ENCODE measurements at regions of chr2 and their contacts with region 1.

Region 1: GRCh38 chr2:101001691-101002561 is at the start of gene RPL31:
- DNase-seq: peak; percentile 98
- ATAC-seq: peak; percentile 94
- H3K4me3 Mint-ChIP-seq: peak within 1 kb of the TSS; percentile 97
- H3K27ac Mint-ChIP-seq: peak within 1 kb of the TSS; percentile 98
- H3K4me1 Mint-ChIP-seq: peaks cover 45% of the 10 kb centered on the region
- H3K27me3 Mint-ChIP-seq: no peaks in the 10 kb centered on the region
- CTCF ChIP-seq: no peak
- total RNA-seq, gene RPL31: 1,667 to 1,859 TPM

Region 2: GRCh38 chr2:100752628-100753333 is 249.1 kb before region 1 on chr2:
- CTCF ChIA-PET with region 1: no interaction called
- POLR2A ChIA-PET with region 1: no interaction called
- intact Hi-C with region 1: no loop called
- DNase-seq: no peak
- ATAC-seq: no peak
- H3K4me3 Mint-ChIP-seq: no peak overlapping the region
- H3K27ac Mint-ChIP-seq: no peak overlapping the region
- H3K4me1 Mint-ChIP-seq: peaks cover 16% of the 10 kb centered on the region
- H3K27me3 Mint-ChIP-seq: peaks cover 5% of the 10 kb centered on the region
- CTCF ChIP-seq: no peak

Region 3: GRCh38 chr2:100935372-100935752 is 66.6 kb before region 1 on chr2:
- CTCF ChIA-PET with region 1: no interaction called
- POLR2A ChIA-PET with region 1: no interaction called
- intact Hi-C with region 1: no loop called
- DNase-seq: no peak
- ATAC-seq: no peak
- H3K4me3 Mint-ChIP-seq: no peak overlapping the region
- H3K27ac Mint-ChIP-seq: no peak overlapping the region
- H3K4me1 Mint-ChIP-seq: peaks cover 5% of the 10 kb centered on the region
- H3K27me3 Mint-ChIP-seq: no peaks in the 10 kb centered on the region
- CTCF ChIP-seq: no peak

Region 4: DNA sequence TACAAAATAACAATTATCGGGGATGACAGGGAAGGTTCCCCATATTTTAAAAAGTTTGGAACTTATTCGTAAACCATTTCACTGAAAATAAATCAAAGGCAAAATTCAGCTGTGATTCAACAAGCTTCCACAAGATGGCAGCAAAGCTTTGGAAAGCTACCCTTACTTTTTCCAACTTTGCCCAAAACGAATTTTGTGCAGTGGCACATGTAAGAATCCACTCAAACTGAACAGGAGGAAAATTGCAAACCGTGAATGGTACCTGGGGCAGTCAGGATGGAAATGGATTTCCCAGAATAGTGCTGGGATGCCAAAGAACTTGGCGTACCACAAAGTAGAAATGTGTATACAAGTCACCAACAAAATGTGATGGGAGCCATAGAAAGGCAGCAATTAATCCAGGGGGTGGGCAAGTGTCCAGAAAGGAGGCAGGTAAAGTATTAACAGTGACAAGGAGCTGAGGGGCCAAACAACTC is 10.8 kb after region 1 on chr2:
- CTCF ChIA-PET with region 1: interaction called, 14 read pairs
- POLR2A ChIA-PET with region 1: interaction called, 8 read pairs
- intact Hi-C with region 1: no loop called
- DNase-seq: peak; percentile 34
- ATAC-seq: no peak
- H3K4me3 Mint-ChIP-seq: no peak overlapping the region
- H3K27ac Mint-ChIP-seq: no peak overlapping the region
- H3K4me1 Mint-ChIP-seq: peaks cover 22% of the 10 kb centered on the region
- H3K27me3 Mint-ChIP-seq: no peaks in the 10 kb centered on the region
- CTCF ChIP-seq: peak; percentile 90

Region 5: GRCh38 chr2:101047075-101047766 is 45.3 kb after region 1 on chr2:
- CTCF ChIA-PET with region 1: no interaction called
- POLR2A ChIA-PET with region 1: no interaction called
- intact Hi-C with region 1: no loop called
- DNase-seq: no peak
- ATAC-seq: no peak
- H3K4me3 Mint-ChIP-seq: no peak overlapping the region
- H3K27ac Mint-ChIP-seq: no peak overlapping the region
- H3K4me1 Mint-ChIP-seq: no peaks in the 10 kb centered on the region
- H3K27me3 Mint-ChIP-seq: no peaks in the 10 kb centered on the region
- CTCF ChIP-seq: no peak